Activated CD4-positive, alpha-beta T cell treated with anti-CD3 and anti-CD28 coated beads, Interleukin-2, amount 10 ng/mL, durations not matched to agents 7 days and 5 days (primary cell): ENCODE measurements at regions of chr1 and their contacts with region 1.

Region 1: GRCh38 chr1:206803221-206803730 is 31.0 kb upstream of the IL10 start:
- DNase-seq: peak; percentile 91
- H3K4me3 Mint-ChIP-seq: peak overlapping the region; percentile 28
- H3K27ac Mint-ChIP-seq: peak overlapping the region; percentile 89
- H3K4me1 Mint-ChIP-seq: peaks cover 74% of the 10 kb centered on the region
- H3K27me3 Mint-ChIP-seq: peaks cover 32% of the 10 kb centered on the region

Region 2: GRCh38 chr1:206766251-206766856 is 36.9 kb before region 1 on chr1:
- CTCF ChIA-PET with region 1: interaction called, 15 read pairs
- POLR2A ChIA-PET with region 1: interaction called, 3 read pairs
- DNase-seq: peak; percentile 75
- H3K4me3 Mint-ChIP-seq: peak overlapping the region; percentile 52
- H3K27ac Mint-ChIP-seq: peak overlapping the region; percentile 71
- H3K4me1 Mint-ChIP-seq: peaks cover 62% of the 10 kb centered on the region
- H3K27me3 Mint-ChIP-seq: peaks cover 19% of the 10 kb centered on the region

Region 3: DNA sequence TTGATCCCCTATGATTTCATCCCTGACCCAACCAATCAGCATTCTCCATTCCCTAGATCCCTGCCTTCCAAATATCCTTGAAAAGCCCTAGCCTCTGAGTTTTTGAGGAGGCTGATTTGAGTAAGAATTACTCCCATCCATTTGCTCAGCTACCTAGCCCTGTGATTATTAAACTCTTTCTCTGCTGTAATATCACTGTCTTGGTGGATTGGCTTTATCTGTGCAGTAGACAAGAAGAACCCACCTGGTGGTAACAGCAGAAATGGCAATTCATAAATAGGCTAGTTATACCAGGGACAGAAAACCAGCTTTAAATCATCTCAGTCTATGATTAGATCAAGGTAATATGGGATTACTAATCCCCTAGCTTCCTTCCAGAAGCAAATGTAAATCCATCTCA is 75.2 kb after region 1 on chr1:
- CTCF ChIA-PET with region 1: no interaction called
- POLR2A ChIA-PET with region 1: no interaction called
- DNase-seq: no peak
- H3K4me3 Mint-ChIP-seq: no peak overlapping the region
- H3K27ac Mint-ChIP-seq: no peak overlapping the region
- H3K4me1 Mint-ChIP-seq: no peaks in the 10 kb centered on the region
- H3K27me3 Mint-ChIP-seq: peaks cover 5% of the 10 kb centered on the region